Upper lobe of right lung (tissue), 1 donor: ENCODE measurements at regions of chr12 and their contacts with region 1.

Region 1: DNA sequence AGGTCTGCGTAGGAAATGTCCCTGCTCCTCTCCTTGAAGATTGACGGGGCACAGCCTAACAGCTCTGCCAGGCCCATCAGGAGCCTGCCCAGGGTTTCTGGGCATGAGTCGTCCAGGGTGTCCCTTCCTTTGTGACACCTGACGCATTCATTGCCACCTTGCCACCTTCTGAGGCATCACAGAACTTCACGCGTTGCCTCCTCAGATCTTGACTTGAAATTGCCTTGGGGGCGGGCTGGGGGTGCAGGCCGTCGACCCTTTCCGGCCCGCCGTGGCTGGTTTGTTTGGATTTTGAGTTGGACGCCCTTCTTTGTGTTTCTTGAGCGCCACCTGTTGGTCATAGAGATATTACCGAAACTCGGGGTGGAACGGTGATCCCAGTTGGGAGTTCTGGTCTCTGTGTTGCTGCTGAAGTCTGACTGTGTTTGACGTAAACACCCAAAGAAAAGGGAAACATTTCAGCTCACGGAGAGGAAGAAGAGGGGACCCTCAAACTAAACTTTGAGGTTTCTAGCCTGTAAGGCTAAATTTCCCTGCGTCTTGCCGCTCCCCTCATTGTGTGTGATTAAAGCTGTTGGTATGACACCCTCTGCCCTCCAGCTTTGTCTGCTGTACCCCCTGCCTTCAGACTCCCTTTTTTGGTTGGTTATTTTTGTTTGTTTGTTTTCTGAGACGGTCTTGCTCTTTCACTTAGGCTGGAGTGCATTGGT is 44.6 kb downstream of the MLXIP start:
- DNase-seq: no peak
- ATAC-seq: peak; percentile 77
- H3K4me3 ChIP-seq: no peak overlapping the region
- H3K27ac ChIP-seq: no peak overlapping the region
- H3K4me1 ChIP-seq: peaks cover 30% of the 10 kb centered on the region
- H3K27me3 ChIP-seq: no peaks in the 10 kb centered on the region
- CTCF ChIP-seq: peak; percentile 77

Region 2: GRCh38 chr12:122054842-122055520 is 68.2 kb before region 1 on chr12:
- intact Hi-C with region 1: loop called (anchors 2 kb)
- DNase-seq: no peak
- ATAC-seq: no peak
- H3K4me3 ChIP-seq: no peak overlapping the region
- H3K27ac ChIP-seq: no peak overlapping the region
- H3K4me1 ChIP-seq: peaks cover 18% of the 10 kb centered on the region
- H3K27me3 ChIP-seq: no peaks in the 10 kb centered on the region
- CTCF ChIP-seq: no peak